ENCODE measurements at regions of chr1 and their contacts with region 1.

Region 1: DNA sequence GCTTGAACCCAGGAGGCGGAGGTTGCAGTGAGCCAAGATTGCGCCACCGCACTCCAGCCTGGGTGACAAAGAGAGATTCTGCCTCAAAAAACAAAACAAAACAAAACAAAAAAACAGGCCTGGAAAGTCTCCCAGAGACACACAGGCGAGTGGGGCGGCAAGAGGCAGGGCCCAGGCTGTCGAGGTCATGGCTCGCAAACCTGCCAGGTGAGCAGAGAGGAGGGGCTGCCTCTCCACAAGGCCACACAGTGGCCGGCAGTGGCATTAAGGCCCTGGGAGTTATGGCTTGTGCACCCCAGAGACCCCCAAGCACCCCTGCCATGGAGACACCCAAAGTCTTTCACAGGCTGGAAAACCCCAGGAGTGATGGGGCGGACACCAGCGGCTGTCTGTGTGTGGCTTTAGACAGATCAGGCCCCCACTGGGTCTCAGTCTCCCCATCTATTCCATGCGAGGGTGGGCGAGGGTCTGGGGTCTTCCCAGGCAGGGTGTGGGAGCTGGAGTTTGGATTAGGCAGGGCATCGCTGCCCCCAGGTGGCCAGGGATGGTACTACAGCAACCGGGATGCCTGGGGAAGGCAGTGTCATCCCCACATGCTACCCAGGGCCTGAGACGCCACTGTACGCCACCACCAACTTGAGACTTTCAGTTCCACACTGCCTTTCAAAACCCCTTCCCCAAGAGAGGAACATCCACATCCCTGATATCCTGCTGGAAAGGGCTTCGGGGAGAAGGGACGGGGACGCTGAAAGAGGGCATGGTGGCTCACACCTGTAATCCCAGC is 7.3 kb upstream of the CTRC start:
- DNase-seq: peak; percentile 85

Region 2: DNA sequence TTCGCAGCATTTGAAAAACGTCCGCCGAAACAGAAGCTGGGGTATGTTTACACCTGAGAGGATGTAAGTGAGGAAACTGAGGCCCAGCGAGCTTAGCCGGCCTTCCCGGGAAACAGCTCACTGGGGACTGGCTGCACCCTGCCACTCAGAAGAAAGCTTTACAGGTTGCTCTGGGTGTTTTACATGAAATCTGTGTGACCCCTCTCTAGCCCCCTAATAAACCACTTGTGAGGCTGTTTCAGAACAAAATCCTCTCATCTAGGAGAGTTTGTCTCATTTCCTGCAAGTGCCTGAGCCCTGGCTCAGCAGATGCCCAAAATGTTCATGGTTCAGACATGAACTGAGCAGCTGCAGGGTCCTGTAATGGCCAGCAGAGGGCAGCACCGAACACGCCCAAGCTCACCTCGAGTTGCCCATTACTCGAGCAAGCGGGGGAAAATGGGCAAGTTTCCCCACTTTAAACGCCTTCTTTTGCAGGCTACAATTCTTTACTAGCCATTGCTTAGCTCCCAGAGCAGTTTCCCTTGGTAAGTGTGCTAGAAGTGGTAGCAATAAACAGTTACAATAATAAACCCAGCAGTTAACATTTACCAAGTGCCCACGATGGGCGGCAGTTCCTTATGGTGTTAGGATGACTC is 107.5 kb before region 1 on chr1:
- CTCF ChIA-PET with region 1: interaction called, 23 read pairs
- POLR2A ChIA-PET with region 1: no interaction called
- DNase-seq: peak; percentile 77

Region 3: DNA sequence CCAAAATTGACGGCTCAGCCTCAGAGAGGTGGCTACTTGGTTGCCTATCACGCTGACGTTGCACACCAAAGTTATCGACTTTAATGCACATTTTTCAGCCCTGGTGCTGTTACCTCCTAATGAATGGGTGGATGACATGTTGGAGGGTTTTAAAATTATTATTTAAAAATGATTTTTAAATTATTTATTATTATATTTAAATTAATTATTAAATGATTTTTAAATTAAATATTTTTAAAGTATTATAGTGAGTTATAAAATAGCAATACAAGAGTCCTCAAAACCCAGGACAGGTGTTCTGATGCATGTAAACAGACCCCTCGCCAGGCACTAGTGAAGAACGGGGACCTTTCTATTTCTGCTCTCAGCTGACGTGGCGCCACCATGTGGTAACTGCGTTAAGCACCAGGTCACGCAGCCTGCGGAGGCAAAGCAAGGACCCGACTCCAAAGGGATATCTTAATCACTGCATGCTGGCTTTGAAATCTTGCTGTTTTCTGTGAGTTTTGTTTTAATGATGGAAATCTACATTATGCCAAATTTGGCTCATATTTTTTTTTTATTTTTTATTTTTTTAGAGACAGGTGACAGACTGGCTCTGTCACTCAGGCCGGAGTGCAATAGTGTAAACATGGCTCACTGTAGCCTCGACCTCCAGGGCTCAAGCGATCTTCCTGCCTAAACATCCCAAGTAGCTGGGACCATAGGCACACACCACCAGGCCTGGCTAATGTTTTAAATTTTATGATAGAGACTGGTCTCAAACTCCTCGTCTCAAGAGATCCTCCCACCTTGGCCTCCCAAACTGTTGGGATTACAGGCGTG is 70.4 kb after region 1 on chr1:
- CTCF ChIA-PET with region 1: no interaction called
- POLR2A ChIA-PET with region 1: no interaction called
- DNase-seq: peak; percentile 84

Measured in HEK293T (cell line).